Activated B cell treated with CpG ODN at 0.5 μM for 24 hours (primary cell): ENCODE measurements at regions of chr1 and their contacts with region 1.

Region 1: DNA sequence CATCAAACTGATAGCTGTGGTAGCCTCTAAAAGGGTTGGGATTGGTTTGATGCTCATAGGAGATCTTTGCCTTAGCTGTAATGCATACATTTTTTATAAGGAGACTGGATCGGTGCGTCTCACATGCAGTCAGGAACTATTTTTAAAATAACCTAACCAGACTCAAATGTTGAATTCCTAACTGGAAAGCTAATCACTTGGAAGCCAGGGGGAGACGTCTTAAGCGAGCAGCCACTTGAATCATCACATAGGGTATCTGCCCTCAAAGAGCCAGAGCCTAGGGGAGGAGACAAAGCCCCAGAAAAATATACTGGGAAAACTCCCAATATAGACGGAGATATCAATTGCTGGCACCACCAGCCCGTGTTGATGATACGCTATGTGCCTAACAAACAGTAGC is 61.7 kb upstream of the PUM1 start:
- DNase-seq: no peak
- ATAC-seq: no peak
- H3K4me3 Mint-ChIP-seq: no peak overlapping the region
- H3K27ac Mint-ChIP-seq: no peak overlapping the region
- H3K4me1 Mint-ChIP-seq: no peaks in the 10 kb centered on the region
- H3K27me3 Mint-ChIP-seq: no peaks in the 10 kb centered on the region
- CTCF ChIP-seq: no peak

Region 2: GRCh38 chr1:31155216-31155841 is 28.1 kb after region 1 on chr1:
- CTCF ChIA-PET with region 1: no interaction called
- POLR2A ChIA-PET with region 1: interaction called, 13 read pairs
- intact Hi-C with region 1: no loop called
- DNase-seq: peak; percentile 70
- ATAC-seq: peak; percentile 77
- H3K4me3 Mint-ChIP-seq: peak overlapping the region; percentile 85
- H3K27ac Mint-ChIP-seq: peak overlapping the region; percentile 70
- H3K4me1 Mint-ChIP-seq: peaks cover 11% of the 10 kb centered on the region
- H3K27me3 Mint-ChIP-seq: no peaks in the 10 kb centered on the region
- CTCF ChIP-seq: no peak